ENCODE measurements at regions of chr3 and their contacts with region 1.

Region 1: GRCh38 chr3:27533718-27534573 is 49.8 kb upstream of the SLC4A7 start:
- DNase-seq: no peak
- H3K4me3 Mint-ChIP-seq: no peak overlapping the region
- H3K27ac Mint-ChIP-seq: peak overlapping the region; percentile 82
- H3K4me1 Mint-ChIP-seq: peaks cover 21% of the 10 kb centered on the region
- H3K27me3 Mint-ChIP-seq: no peaks in the 10 kb centered on the region

Region 2: GRCh38 chr3:27632431-27633223 is 98.7 kb after region 1 on chr3:
- intact Hi-C with region 1: loop called (anchors 1 kb)
- DNase-seq: peak; percentile 34
- H3K4me3 Mint-ChIP-seq: peak overlapping the region; percentile 93
- H3K27ac Mint-ChIP-seq: peak overlapping the region; percentile 90
- H3K4me1 Mint-ChIP-seq: peaks cover 44% of the 10 kb centered on the region
- H3K27me3 Mint-ChIP-seq: no peaks in the 10 kb centered on the region

Measured in activated T-helper 2 cell treated with anti-CD3 and anti-CD28 coated beads, Interferon-gamma antibody, Interleukin-2, Interleukin-4, amounts not matched to agents 10 μg/mL and 5 μg/mL and 100 μg/mL, durations not matched to agents 14 hours and 24 hours and 36 hours (primary cell).